Heart left ventricle (tissue), 16 donors: ENCODE measurements at regions of chr16 and their contacts with region 1.

Region 1: GRCh38 chr16:29182501-29182900 is 197.6 kb downstream of the LAT start:
- DNase-seq: peak; percentile 46 to 90 (median 81)
- ATAC-seq: peak in 3 of 4 donors; percentile 25 to 56 (median 30)
- H3K4me3 ChIP-seq: no peak overlapping the region
- H3K27ac ChIP-seq: peak overlapping the region in 10 of 12 donors; percentile 61 to 90 (median 74)
- H3K4me1 ChIP-seq: peaks cover 0 to 65% (median 33%) of the 10 kb centered on the region in 12 donors
- H3K27me3 ChIP-seq: no peaks in the 10 kb centered on the region
- CTCF ChIP-seq: no peak
- POLR2A ChIP-seq: no peak

Region 2: GRCh38 chr16:28879841-28880588 is 302.5 kb before region 1 on chr16:
- intact Hi-C with region 1: no loop called
- DNase-seq: peak; percentile 88 to 93 (median 89)
- ATAC-seq: peak; percentile 61 to 96 (median 94)
- H3K4me3 ChIP-seq: peak overlapping the region; percentile 29 to 92 (median 69)
- H3K27ac ChIP-seq: peak overlapping the region in 4 of 12 donors; percentile 24 to 56 (median 34)
- H3K4me1 ChIP-seq: peaks cover 4 to 16% (median 11%) of the 10 kb centered on the region in 12 donors
- H3K27me3 ChIP-seq: peaks cover 0 to 10% (median 0%) of the 10 kb centered on the region in 9 donors
- CTCF ChIP-seq: peak in 5 of 12 donors; percentile 7 to 40 (median 16)
- POLR2A ChIP-seq: peak in 1 of 2 donors; percentile 43

Region 3: DNA sequence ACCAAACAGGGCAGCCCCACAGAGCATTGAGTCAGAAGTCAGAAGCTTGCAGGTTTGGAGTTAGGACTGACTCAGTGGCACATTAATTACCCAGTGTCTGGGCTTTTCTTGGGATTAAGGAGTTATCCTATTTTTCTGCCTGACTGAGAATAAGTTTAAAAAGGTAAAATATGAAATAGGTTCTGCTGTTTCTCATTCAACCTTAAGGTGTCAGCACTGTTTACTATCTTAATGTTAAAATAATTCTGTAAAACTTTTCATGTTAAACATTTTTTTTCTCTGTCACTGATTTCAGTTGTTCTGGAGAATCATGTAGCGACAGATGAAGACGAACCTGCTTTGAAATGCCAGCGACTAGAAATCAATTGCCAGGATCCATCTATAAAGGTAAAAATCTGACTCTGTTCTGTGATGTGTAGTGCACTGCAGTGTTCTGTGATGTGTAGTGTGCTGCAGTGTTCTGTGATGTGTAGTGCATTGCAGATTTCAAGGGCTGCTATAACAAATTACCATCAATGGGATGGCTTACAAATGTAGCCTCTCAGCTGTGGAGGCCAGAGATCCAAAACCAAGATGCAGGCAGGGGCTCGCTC is 69.7 kb before region 1 on chr16:
- intact Hi-C with region 1: loop called in 2 of 10 experiments (anchors 5 kb)
- DNase-seq: no peak
- ATAC-seq: no peak
- H3K4me3 ChIP-seq: no peak overlapping the region
- H3K27ac ChIP-seq: no peak overlapping the region
- H3K4me1 ChIP-seq: peaks cover 0 to 27% (median 12%) of the 10 kb centered on the region in 12 donors
- H3K27me3 ChIP-seq: no peaks in the 10 kb centered on the region
- CTCF ChIP-seq: no peak
- POLR2A ChIP-seq: no peak

Region 4: GRCh38 chr16:29129514-29129913 is 53.0 kb before region 1 on chr16:
- intact Hi-C with region 1: loop called in 1 of 10 experiments (anchors 10 kb)
- DNase-seq: peak in 2 of 5 donors; percentile 64 to 65
- ATAC-seq: peak; percentile 26 to 68 (median 48)
- H3K4me3 ChIP-seq: no peak overlapping the region
- H3K27ac ChIP-seq: peak overlapping the region in 9 of 12 donors; percentile 2 to 76 (median 65)
- H3K4me1 ChIP-seq: peaks cover 0 to 46% (median 21%) of the 10 kb centered on the region in 12 donors
- H3K27me3 ChIP-seq: no peaks in the 10 kb centered on the region
- CTCF ChIP-seq: no peak
- POLR2A ChIP-seq: no peak